Activated CD4-positive, alpha-beta T cell treated with anti-CD3 and anti-CD28 coated beads for 36 hours (primary cell): ENCODE measurements at regions of chr3 and their contacts with region 1.

Region 1: GRCh38 chr3:186882881-186883685 is 40.6 kb downstream of the ADIPOQ start:
- DNase-seq: peak; percentile 78
- ATAC-seq: peak; percentile 85
- H3K4me3 Mint-ChIP-seq: peak overlapping the region; percentile 20
- H3K27ac Mint-ChIP-seq: peak overlapping the region; percentile 90
- H3K4me1 Mint-ChIP-seq: peaks cover 62% of the 10 kb centered on the region
- H3K27me3 Mint-ChIP-seq: no peaks in the 10 kb centered on the region

Region 2: GRCh38 chr3:186514296-186515002 is 368.6 kb before region 1 on chr3:
- CTCF ChIA-PET with region 1: no interaction called
- POLR2A ChIA-PET with region 1: no interaction called
- intact Hi-C with region 1: loop called in 1 of 2 experiments (anchors 5 kb)
- DNase-seq: peak; percentile 67
- ATAC-seq: peak; percentile 67
- H3K4me3 Mint-ChIP-seq: no peak overlapping the region
- H3K27ac Mint-ChIP-seq: peak overlapping the region; percentile 79
- H3K4me1 Mint-ChIP-seq: peaks cover 95% of the 10 kb centered on the region
- H3K27me3 Mint-ChIP-seq: no peaks in the 10 kb centered on the region

Region 3: DNA sequence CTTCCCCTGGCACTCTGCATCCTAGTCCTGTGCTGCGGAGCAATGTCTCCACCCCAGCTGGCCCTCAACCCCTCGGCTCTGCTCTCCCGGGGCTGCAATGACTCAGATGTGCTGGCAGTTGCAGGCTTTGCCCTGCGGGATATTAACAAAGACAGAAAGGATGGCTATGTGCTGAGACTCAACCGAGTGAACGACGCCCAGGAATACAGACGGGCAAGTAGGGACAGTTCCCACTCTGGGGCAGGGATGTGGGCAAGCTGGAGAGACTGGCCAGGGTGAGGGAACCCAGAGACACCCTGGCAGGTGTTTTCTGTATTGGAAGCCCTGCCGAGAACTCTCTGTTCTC is 242.6 kb before region 1 on chr3:
- CTCF ChIA-PET with region 1: no interaction called
- POLR2A ChIA-PET with region 1: no interaction called
- intact Hi-C with region 1: no loop called
- DNase-seq: no peak
- ATAC-seq: no peak
- H3K4me3 Mint-ChIP-seq: no peak overlapping the region
- H3K27ac Mint-ChIP-seq: no peak overlapping the region
- H3K4me1 Mint-ChIP-seq: peaks cover 3% of the 10 kb centered on the region
- H3K27me3 Mint-ChIP-seq: peaks cover 17% of the 10 kb centered on the region

Region 4: GRCh38 chr3:186669378-186670084 is 213.6 kb before region 1 on chr3:
- CTCF ChIA-PET with region 1: no interaction called
- POLR2A ChIA-PET with region 1: no interaction called
- intact Hi-C with region 1: no loop called
- DNase-seq: peak; percentile 7
- ATAC-seq: peak; percentile 81
- H3K4me3 Mint-ChIP-seq: no peak overlapping the region
- H3K27ac Mint-ChIP-seq: peak overlapping the region; percentile 45
- H3K4me1 Mint-ChIP-seq: peaks cover 13% of the 10 kb centered on the region
- H3K27me3 Mint-ChIP-seq: peaks cover 13% of the 10 kb centered on the region

Region 5: DNA sequence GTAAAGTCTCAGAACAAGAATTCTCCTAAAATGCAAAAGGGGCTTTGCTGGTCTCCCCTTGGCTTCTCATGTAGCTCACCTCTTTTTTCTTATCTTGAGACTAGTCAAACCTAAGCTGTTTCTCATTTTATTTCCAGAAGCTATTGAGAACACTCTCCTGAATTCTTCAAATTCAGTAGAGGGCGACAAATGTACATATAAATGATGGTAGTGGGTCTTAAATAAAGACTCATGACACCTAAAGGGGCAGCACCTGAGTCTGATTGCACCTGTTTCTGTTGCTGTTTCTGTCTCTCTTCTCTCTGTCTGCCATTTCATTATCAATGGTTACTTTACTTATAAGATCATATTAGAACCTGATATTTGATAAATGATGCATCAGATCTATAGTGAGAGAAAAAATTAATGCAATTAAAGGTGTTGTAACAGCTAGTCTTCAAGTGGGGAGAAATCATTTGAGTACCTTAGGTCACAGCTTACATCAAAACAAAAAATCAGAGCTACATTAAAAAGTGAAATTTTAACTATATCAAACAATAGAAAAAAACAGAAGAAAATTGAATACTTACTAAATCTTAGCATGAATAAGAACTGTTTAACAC is 33.6 kb before region 1 on chr3:
- CTCF ChIA-PET with region 1: interaction called, 6 read pairs
- POLR2A ChIA-PET with region 1: no interaction called
- intact Hi-C with region 1: loop called in 1 of 2 experiments (anchors 5 kb)
- DNase-seq: peak; percentile 32
- ATAC-seq: peak; percentile 90
- H3K4me3 Mint-ChIP-seq: no peak overlapping the region
- H3K27ac Mint-ChIP-seq: peak overlapping the region; percentile 52
- H3K4me1 Mint-ChIP-seq: peaks cover 18% of the 10 kb centered on the region
- H3K27me3 Mint-ChIP-seq: peaks cover 7% of the 10 kb centered on the region

Region 6: GRCh38 chr3:186909078-186909853 is 26.2 kb after region 1 on chr3:
- CTCF ChIA-PET with region 1: interaction called, 3 read pairs
- POLR2A ChIA-PET with region 1: no interaction called
- intact Hi-C with region 1: loop called in 1 of 2 experiments (anchors 1 kb)
- DNase-seq: peak; percentile 82
- ATAC-seq: peak; percentile 84
- H3K4me3 Mint-ChIP-seq: peak overlapping the region; percentile 49
- H3K27ac Mint-ChIP-seq: peak overlapping the region; percentile 93
- H3K4me1 Mint-ChIP-seq: peaks cover 18% of the 10 kb centered on the region
- H3K27me3 Mint-ChIP-seq: no peaks in the 10 kb centered on the region

Region 7: GRCh38 chr3:187000711-187001151 is 117.6 kb after region 1 on chr3:
- CTCF ChIA-PET with region 1: no interaction called
- POLR2A ChIA-PET with region 1: no interaction called
- intact Hi-C with region 1: loop called (anchors 1 kb)
- DNase-seq: peak; percentile 54
- ATAC-seq: peak; percentile 92
- H3K4me3 Mint-ChIP-seq: peak overlapping the region; percentile 27
- H3K27ac Mint-ChIP-seq: peak overlapping the region; percentile 89
- H3K4me1 Mint-ChIP-seq: peaks cover 66% of the 10 kb centered on the region
- H3K27me3 Mint-ChIP-seq: no peaks in the 10 kb centered on the region

Region 8: DNA sequence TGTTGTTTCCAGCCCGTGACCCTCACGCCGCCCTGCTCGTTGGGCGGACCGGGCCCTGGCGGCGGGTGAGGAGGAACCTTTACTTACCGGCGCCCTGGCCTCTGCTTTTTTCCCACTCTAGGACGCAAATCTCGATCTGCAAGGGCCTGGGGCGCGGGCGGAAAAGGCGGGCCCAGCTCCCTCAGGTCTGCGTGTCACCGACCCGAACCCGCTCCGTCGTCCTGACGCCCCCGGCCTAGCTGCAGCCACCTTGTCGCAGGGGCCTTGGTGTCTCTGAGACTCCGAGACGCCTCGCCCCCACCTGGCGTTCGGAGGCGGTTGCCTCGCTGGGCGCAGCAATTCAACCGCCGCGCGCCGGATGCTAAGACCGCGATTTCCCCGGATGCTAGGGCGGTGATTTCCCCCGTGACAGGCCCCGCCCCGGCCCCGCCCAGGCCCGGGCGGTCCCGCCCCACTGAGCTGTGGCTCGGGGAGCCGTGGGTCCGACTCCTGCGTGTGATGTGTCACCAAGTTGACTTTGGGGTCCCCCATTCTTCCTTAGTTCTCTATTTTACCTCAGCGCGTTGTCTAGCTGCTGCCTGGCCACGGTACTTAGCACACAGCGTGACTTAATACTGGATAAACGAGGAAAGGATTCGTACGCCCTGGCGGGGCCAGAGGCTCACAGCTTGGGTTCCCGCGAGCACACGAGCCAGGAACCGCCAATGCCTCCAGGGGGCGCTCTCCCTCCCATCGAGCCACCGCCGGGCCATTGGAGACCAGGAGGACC is 256.2 kb after region 1 on chr3 and contains the start of gene RPL39L:
- CTCF ChIA-PET with region 1: interaction called, 5 read pairs
- POLR2A ChIA-PET with region 1: interaction called, 3 read pairs
- intact Hi-C with region 1: loop called in 1 of 2 experiments (anchors 2 kb)
- DNase-seq: peak; percentile 97
- ATAC-seq: peak; percentile 94
- H3K4me3 Mint-ChIP-seq: peak within 1 kb of the TSS; percentile 79
- H3K27ac Mint-ChIP-seq: peak within 1 kb of the TSS; percentile 95
- H3K4me1 Mint-ChIP-seq: peaks cover 27% of the 10 kb centered on the region
- H3K27me3 Mint-ChIP-seq: no peaks in the 10 kb centered on the region
- total RNA-seq, gene RPL39L: 18.2 to 21.4 TPM